Heart right ventricle (tissue), 16 donors: ENCODE measurements at regions of chr1 and their contacts with region 1.

Region 1: GRCh38 chr1:38046884-38047602 is 450 bp upstream of the POU3F1 start:
- DNase-seq: peak; percentile 85 to 91
- ATAC-seq: peak; percentile 94 to 98 (median 96)
- H3K4me3 ChIP-seq: peak overlapping the region; percentile 53 to 82 (median 66)
- H3K27ac ChIP-seq: peak overlapping the region in 5 of 10 donors; percentile 4 to 51 (median 35)
- H3K4me1 ChIP-seq: peaks cover 9 to 26% (median 23%) of the 10 kb centered on the region in 9 donors
- H3K27me3 ChIP-seq: peaks cover 33 to 67% (median 52%) of the 10 kb centered on the region in 7 donors
- CTCF ChIP-seq: peak in 4 of 9 donors; percentile 12 to 40 (median 40)

Region 2: GRCh38 chr1:36781098-36781497 is 1265.9 kb before region 1 on chr1:
- intact Hi-C with region 1: loop called in 1 of 10 experiments (anchors 5 kb)
- DNase-seq: no peak
- ATAC-seq: no peak
- H3K4me3 ChIP-seq: no peak overlapping the region
- H3K27ac ChIP-seq: no peak overlapping the region
- H3K4me1 ChIP-seq: no peaks in the 10 kb centered on the region
- H3K27me3 ChIP-seq: peaks cover 0 to 67% (median 55%) of the 10 kb centered on the region in 7 donors
- CTCF ChIP-seq: no peak

Region 3: DNA sequence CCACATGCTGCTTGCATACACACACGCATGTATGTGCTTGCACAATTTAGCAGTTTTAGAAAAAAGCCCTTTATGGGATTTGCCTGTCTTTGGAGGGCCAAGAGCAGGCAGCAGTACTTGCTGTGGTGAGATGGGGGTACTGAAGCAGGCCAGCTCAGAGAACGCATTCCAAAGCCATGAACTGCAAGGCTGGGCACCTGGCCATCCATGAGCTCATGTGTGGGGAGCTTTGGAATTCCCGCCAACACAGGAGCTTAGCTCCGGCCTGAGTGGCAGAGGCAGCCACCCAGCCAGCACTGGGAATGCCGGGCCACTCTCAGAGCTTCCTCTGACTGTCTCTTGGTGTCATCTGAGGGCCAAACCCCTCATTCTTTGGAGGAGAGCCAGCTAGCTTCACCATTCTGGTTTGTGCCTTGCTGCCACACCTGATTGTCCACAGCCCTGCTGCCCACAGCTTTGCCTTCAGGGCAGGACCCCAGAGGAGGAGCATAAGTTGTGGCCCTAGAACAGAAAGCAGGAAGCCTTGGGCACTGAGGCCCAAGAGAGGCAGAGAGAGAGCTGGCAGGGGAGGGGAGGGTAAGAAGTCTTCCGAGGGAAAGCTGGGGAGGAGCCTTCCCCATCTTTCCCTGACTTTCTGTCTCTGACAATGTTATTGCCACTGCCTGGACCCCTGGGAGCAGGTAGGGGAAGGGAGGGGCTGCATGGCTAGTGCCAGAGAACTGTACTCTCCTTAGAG is 91.6 kb after region 1 on chr1:
- intact Hi-C with region 1: loop called in 1 of 10 experiments (anchors 5 kb)
- DNase-seq: peak; percentile 80 to 86
- ATAC-seq: peak; percentile 91 to 99 (median 95)
- H3K4me3 ChIP-seq: no peak overlapping the region
- H3K27ac ChIP-seq: peak overlapping the region in 5 of 10 donors; percentile 24 to 58 (median 41)
- H3K4me1 ChIP-seq: peaks cover 0 to 32% (median 14%) of the 10 kb centered on the region in 9 donors
- H3K27me3 ChIP-seq: peaks cover 0 to 91% (median 61%) of the 10 kb centered on the region in 7 donors
- CTCF ChIP-seq: peak in 4 of 9 donors; percentile 12 to 46 (median 30)

Region 4: DNA sequence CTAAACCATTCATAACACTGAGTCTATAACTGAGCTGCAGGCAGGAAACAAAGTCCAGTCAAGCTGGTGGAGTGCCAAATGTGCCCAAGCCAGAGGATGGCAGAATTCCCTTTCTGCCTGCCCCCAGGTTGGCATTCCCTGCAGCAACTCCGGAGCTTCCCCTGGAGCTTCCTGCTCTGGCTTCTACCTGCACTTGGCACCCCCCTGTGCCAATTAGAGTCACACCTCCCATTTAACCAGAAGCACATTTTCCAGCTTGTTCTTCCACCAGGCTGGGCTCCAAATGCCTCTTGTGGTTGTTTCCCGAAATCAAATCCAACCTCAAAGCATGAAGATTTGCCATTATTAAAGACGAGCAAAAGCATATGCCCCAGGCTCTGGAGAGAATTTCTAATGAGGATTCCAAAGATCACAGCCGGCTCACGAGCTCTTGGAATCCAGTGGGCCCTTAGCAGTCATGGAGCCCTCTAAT is 518.0 kb after region 1 on chr1:
- intact Hi-C with region 1: no loop called
- DNase-seq: no peak
- ATAC-seq: no peak
- H3K4me3 ChIP-seq: no peak overlapping the region
- H3K27ac ChIP-seq: no peak overlapping the region
- H3K4me1 ChIP-seq: peaks cover 0 to 7% (median under 1%) of the 10 kb centered on the region in 9 donors
- H3K27me3 ChIP-seq: peaks cover 0 to 74% (median 52%) of the 10 kb centered on the region in 7 donors
- CTCF ChIP-seq: no peak

Region 5: DNA sequence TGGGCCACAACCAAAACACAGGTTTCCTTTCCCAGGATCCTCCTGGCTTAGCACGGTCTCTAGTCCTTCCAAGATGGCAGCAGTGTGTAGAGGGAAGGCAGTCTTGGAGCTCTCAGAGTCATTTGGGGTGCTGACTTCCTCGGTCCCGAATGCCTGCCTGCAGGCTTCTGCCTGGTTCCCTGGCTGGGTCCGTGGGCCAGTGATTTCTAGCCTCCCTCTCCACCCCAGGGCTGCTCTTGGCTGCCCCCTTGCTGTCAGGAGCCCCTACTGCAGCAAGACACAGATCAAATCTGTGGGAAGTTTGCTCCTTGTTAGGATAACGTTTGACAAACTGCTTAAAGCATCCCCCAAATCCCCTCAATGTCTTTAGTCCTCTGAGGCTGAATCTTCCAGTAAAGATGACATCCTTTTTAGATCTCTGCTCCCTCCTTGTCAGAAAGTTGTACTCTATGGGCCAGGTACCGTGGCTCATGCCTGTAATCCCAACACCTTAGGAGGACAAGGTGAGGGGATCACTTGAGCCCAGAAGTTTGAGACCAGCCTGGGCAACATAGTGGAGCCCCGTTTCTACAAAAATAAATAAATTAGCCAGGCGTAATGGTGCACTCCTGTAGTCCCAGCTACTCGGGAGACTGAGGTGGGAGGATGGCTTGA is 540.1 kb after region 1 on chr1:
- intact Hi-C with region 1: loop called in 3 of 10 experiments (anchors 5 to 10 kb)
- DNase-seq: peak in 1 of 2 donors; percentile 34
- ATAC-seq: peak in 7 of 8 donors; percentile 42 to 62 (median 53)
- H3K4me3 ChIP-seq: no peak overlapping the region
- H3K27ac ChIP-seq: no peak overlapping the region
- H3K4me1 ChIP-seq: peaks cover 0 to 8% (median 0%) of the 10 kb centered on the region in 9 donors
- H3K27me3 ChIP-seq: peaks cover 0 to 16% (median 5%) of the 10 kb centered on the region in 7 donors
- CTCF ChIP-seq: peak; percentile 51 to 89 (median 78)

Region 6: DNA sequence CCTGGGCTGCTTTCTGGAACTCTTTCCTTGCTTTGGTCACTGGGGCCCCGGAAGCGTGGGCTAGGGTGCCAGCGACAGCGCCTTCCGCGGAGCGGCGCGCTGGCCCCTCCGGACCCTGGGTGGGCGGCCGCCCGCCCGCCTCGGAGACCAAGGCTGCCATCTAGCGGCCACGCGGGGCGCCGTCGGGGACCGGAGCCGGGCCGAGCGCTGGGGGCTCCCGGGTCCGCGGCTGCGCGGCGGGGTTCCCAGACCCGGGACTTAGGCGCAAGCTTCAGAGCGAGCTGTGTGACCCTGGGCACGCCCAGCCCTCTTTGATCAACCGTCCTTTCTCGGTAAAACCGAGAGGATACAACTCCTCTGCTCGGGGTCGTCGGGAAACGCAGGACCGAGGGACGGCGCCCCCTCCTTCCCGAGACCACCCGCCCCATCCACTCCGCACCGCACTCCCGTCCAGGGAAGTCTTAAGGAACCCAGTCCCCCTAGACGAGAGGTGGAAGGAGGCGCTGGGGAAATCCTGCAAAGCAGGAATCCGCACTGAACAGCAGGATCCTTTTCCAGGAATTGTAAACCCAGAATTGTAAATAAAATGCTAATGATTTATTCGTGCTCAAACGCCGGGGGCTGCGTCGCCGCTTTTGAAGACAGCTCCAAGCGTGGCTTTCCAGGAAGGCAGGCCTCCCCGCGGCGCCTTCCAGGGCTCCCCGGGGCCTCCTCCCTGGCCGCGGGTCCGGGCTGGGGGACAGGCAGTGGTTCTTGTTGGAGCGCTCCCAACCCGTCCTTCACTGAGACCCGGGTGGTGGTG is 771.3 kb after region 1 on chr1:
- intact Hi-C with region 1: loop called in 2 of 10 experiments (anchors 10 kb)
- DNase-seq: peak in 1 of 2 donors; percentile 36
- ATAC-seq: peak in 6 of 8 donors; percentile 50 to 82 (median 67)
- H3K4me3 ChIP-seq: peak overlapping the region in 8 of 10 donors; percentile 4 to 42 (median 32)
- H3K27ac ChIP-seq: no peak overlapping the region
- H3K4me1 ChIP-seq: peaks cover 0 to 17% (median 11%) of the 10 kb centered on the region in 9 donors
- H3K27me3 ChIP-seq: peaks cover 2 to 88% (median 66%) of the 10 kb centered on the region in 7 donors
- CTCF ChIP-seq: peak; percentile 64 to 90 (median 80)

Region 7: GRCh38 chr1:38834937-38835827 is 788.1 kb after region 1 on chr1:
- intact Hi-C with region 1: loop called in 1 of 10 experiments (anchors 10 kb)
- DNase-seq: peak in 1 of 2 donors; percentile 73
- ATAC-seq: peak; percentile 76 to 85 (median 82)
- H3K4me3 ChIP-seq: no peak overlapping the region
- H3K27ac ChIP-seq: no peak overlapping the region
- H3K4me1 ChIP-seq: peaks cover 0 to 22% (median 15%) of the 10 kb centered on the region in 9 donors
- H3K27me3 ChIP-seq: peaks cover 0 to 18% (median 7%) of the 10 kb centered on the region in 7 donors
- CTCF ChIP-seq: peak; percentile 59 to 90 (median 85)